Cardiac septum (tissue), 1 donor: ENCODE measurements at regions of chr1 and their contacts with region 1.

Region 1: GRCh38 chr1:41812051-41812450 is 106.7 kb downstream of the HIVEP3 start:
- DNase-seq: no peak

Region 2: DNA sequence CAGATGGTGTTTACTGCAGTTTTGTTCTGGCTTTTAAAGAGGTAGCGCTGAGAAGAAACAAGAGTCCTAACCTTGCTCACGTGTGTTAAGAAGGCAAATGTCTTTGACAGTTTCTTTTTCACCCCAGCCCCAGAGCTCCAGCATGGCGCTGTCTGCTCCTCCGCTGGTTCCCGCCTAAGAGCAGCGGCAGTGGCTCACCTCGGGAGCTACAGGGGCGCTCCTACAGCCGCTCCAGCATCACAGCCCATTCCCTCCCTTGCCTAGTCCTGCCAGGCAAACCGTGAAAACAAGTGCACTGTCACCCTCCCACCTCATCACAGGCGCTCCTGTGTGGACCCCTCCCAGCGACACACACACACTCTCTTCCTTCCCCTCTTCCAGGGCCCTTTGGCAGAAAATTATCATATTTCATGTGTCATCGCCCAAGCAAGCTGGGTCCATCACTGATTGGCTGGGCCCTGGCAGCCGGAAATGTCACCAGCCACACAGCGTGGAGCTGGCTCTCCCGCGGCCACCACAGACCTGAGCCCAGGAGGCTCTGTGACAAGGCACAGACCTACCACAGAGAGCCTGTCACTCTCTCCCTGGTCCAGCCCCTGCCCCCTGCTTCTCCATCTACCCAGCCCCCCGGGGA is 107.8 kb after region 1 on chr1:
- intact Hi-C with region 1: loop called (anchors 10 kb)
- DNase-seq: no peak

Region 3: DNA sequence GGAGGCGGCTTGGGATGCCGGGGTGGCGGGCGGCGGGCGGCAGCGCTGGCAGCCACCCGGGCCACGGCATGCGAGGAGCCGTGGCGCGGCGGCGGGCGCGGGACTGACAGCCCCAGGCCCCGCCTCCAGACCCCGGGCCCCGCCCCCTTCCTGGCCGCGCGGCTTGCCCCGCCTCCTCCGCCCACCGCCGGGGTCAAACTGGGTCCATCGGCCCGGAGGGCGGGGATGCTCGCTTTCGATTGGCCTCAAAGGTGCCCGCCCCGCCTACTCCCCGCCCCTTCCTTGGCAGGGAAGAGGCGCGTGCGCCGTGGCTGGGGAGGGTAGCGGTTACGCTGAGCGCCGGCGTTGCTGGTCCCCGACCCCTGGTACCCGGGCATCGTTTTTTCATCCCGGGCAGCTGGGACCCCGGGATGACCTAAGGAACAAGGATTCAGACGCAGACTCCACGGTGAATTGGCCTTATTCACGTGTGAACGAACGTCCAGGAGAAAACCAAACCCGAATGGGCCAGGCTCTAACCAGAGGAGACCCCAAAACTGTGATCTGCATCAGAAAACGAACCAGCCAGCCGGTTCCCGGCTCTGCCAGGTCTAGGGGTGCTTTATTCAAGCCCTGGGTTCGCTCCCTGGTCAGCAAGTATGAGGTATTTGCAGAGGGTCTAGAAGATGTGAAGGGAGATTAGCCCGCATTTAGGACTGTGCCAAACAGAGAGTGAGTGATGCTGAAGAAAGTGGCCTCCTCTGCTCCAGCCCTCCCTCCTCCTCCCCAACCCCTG is 224.0 kb after region 1 on chr1:
- intact Hi-C with region 1: loop called (anchors 10 kb)
- DNase-seq: peak; percentile 97